PC-9 (cell line): ENCODE measurements at regions of chr9 and their contacts with region 1.

Region 1: DNA sequence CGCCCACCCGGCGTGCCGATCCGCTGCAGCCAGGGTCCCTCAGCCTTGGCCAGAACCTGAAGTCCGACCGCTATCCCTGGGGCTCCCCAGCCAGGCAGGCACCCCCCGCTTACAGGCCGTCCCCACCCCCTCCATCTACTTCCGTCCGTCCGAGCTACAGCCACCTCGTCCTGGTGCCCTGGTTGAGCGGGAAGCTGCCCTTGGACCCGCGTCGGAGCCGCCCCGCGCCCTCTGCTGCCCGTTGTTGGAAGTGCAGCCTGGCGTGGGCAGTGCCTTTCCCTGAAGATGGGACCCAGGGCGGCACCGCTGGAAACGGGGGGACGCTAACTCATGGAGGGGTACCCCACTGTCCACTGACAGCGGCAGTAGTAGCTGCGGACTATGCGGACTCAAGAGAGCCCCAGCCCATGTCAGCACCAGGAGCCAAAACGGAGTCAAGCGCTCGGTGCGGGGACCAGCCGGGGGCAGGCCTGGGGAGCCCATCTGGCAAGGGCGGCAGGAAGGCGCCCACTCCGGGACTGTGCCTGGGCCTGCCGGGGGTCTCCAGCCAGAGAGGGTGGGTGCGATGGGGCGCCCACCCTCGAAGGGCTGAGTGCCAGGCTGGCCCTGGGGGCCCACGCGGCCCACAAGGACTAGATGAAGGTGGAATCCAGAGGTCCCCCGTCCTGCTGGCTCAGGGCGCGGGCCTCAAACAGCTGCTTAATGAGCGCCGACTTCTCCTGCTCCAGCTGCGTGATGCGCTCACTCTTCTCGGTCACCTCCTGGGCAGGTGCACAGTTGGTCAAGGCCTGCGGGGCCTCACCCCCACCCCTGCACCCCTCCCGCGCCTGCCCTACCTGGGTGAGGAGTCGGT is 6.1 kb downstream of the SAPCD2 start:
- DNase-seq: peak in 1 of 2 experiments; percentile 62
- H3K4me3 ChIP-seq: no peak overlapping the region
- H3K27ac ChIP-seq: no peak overlapping the region
- H3K4me1 ChIP-seq: peaks cover 14% of the 10 kb centered on the region
- H3K27me3 ChIP-seq: no peaks in the 10 kb centered on the region
- CTCF ChIP-seq: peak; percentile 98

Region 2: GRCh38 chr9:136921718-136922117 is 142.5 kb before region 1 on chr9:
- CTCF ChIA-PET with region 1: no interaction called
- POLR2A ChIA-PET with region 1: interaction called, 10 read pairs
- intact Hi-C with region 1: no loop called
- DNase-seq: no peak
- H3K4me3 ChIP-seq: no peak overlapping the region
- H3K27ac ChIP-seq: no peak overlapping the region
- H3K4me1 ChIP-seq: no peaks in the 10 kb centered on the region
- H3K27me3 ChIP-seq: no peaks in the 10 kb centered on the region
- CTCF ChIP-seq: no peak

Region 3: GRCh38 chr9:137046098-137046787 is 18.0 kb before region 1 on chr9 and contains the start of gene NPDC1:
- CTCF ChIA-PET with region 1: interaction called, 19 read pairs
- POLR2A ChIA-PET with region 1: no interaction called
- intact Hi-C with region 1: no loop called
- DNase-seq: peak; percentile 73 to 91
- H3K4me3 ChIP-seq: peak within 1 kb of the TSS; percentile 92
- H3K27ac ChIP-seq: no peak within 1 kb of the TSS
- H3K4me1 ChIP-seq: peaks cover 15% of the 10 kb centered on the region
- H3K27me3 ChIP-seq: peaks cover 6% of the 10 kb centered on the region
- CTCF ChIP-seq: peak; percentile 87
- total RNA-seq, gene NPDC1: 89.8 and 137 TPM in 2 replicates